ENCODE measurements at regions of chr2 and their contacts with region 1.

Region 1: DNA sequence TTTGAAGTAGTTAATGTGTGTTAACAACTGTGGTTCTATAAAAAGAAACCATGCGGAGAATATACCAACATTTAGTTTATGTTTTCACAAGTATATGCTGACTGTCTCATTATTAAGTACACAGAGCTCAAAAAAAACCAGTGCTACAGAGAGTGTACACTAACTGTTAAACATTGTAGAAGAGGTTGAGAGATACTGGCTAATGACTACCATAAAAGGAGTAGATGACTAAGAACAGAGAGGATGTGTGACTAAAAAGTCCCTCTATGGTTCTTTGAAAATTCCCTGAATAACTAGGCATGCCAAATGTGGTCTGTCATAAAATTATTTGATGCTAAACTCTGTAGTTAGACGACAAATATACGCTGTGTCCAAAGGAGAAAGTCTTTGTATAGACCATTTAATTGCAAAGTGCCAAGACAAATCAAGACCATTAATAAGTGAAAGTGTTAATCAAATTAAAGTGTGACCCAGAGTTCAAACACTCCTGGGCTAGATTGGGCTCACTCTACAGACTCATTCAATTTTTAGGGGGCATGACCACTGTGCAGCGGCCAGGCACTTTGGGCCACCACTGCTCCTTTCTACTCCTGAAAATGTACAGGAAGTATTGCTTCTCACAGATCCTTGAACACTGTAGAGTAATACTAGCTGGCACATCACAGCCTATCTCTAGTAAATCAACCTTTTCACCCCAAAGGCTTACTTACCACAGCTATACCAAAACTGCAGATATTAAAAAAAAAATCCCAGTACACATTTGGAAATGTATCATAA is 45.1 kb upstream of the SERTAD2 start:
- DNase-seq: no peak
- H3K4me3 Mint-ChIP-seq: peak overlapping the region; percentile 2
- H3K27ac Mint-ChIP-seq: peak overlapping the region; percentile 84
- H3K4me1 Mint-ChIP-seq: peaks cover 59% of the 10 kb centered on the region
- H3K27me3 Mint-ChIP-seq: no peaks in the 10 kb centered on the region

Region 2: GRCh38 chr2:64609227-64609941 is 89.5 kb before region 1 on chr2:
- intact Hi-C with region 1: loop called (anchors 1 kb)
- DNase-seq: peak; percentile 69
- H3K4me3 Mint-ChIP-seq: peak overlapping the region; percentile 66
- H3K27ac Mint-ChIP-seq: peak overlapping the region; percentile 42
- H3K4me1 Mint-ChIP-seq: peaks cover 24% of the 10 kb centered on the region
- H3K27me3 Mint-ChIP-seq: peaks cover 21% of the 10 kb centered on the region

Region 3: GRCh38 chr2:64679673-64680425 is 19.0 kb before region 1 on chr2:
- intact Hi-C with region 1: loop called (anchors 1 kb)
- DNase-seq: no peak
- H3K4me3 Mint-ChIP-seq: peak overlapping the region; percentile 61
- H3K27ac Mint-ChIP-seq: peak overlapping the region; percentile 93
- H3K4me1 Mint-ChIP-seq: peaks cover 59% of the 10 kb centered on the region
- H3K27me3 Mint-ChIP-seq: no peaks in the 10 kb centered on the region

Region 4: GRCh38 chr2:64737547-64737946 is 38.7 kb after region 1 on chr2:
- intact Hi-C with region 1: loop called (anchors 1 kb)
- DNase-seq: no peak
- H3K4me3 Mint-ChIP-seq: peak overlapping the region; percentile 28
- H3K27ac Mint-ChIP-seq: peak overlapping the region; percentile 79
- H3K4me1 Mint-ChIP-seq: peaks cover 45% of the 10 kb centered on the region
- H3K27me3 Mint-ChIP-seq: no peaks in the 10 kb centered on the region

Region 5: DNA sequence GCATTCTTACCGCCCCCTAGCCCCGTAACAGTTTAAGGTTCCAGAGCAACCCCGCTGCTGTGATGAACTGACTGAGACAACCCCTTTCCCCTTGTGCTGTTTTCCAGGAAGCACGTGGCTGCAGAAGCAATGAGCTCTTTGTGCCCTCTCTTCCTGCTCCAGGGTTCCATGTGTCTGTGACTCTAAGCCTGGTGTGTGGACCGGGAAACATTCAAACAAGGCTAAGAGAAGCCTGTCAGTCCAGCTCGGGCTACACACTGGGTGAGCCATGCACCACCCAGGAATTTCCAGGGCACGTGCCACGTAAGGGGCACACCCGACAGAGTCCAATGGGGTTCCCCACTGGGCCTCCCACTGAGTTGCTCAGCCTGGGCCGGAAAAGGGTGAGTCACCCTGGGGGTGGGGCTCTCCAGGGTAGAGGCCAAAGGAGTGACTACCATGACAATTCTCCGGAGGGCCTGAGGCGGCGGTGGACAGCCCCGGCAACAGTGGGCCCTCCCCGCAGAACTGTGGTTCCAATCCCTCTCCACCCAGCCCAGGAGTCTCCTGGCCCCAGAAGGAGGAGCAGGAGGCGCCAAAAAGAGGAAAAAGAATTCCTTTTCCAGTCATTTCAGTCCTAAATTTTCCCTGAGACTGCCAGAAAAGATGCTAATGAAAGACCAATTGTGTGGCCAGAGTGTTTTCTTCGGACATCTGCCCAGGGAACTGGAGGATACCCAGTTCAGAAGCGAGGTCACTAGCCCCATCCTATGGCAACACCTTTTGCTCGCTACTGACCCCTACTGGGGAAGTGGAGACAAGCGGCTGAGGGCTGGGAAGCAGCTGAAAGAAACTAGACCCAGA is 132.5 kb after region 1 on chr2:
- intact Hi-C with region 1: loop called (anchors 5 kb)
- DNase-seq: peak; percentile 69
- H3K4me3 Mint-ChIP-seq: peak overlapping the region; percentile 15
- H3K27ac Mint-ChIP-seq: peak overlapping the region; percentile 81
- H3K4me1 Mint-ChIP-seq: peaks cover 24% of the 10 kb centered on the region
- H3K27me3 Mint-ChIP-seq: peaks cover 8% of the 10 kb centered on the region

Region 6: GRCh38 chr2:64865073-64865830 is 166.4 kb after region 1 on chr2:
- intact Hi-C with region 1: no loop called
- DNase-seq: peak; percentile 57
- H3K4me3 Mint-ChIP-seq: peak overlapping the region; percentile 74
- H3K27ac Mint-ChIP-seq: no peak overlapping the region
- H3K4me1 Mint-ChIP-seq: peaks cover 4% of the 10 kb centered on the region
- H3K27me3 Mint-ChIP-seq: peaks cover 13% of the 10 kb centered on the region

Measured in activated T-helper 2 cell treated with anti-CD3 and anti-CD28 coated beads, Interferon-gamma antibody, Interleukin-2, Interleukin-4, amounts not matched to agents 10 μg/mL and 5 μg/mL and 100 μg/mL, durations not matched to agents 14 hours and 24 hours and 36 hours (primary cell).